Activated CD8-positive, alpha-beta T cell treated with anti-CD3 and anti-CD28 coated beads for 36 hours (primary cell): ENCODE measurements at regions of chr17 and their contacts with region 1.

Region 1: DNA sequence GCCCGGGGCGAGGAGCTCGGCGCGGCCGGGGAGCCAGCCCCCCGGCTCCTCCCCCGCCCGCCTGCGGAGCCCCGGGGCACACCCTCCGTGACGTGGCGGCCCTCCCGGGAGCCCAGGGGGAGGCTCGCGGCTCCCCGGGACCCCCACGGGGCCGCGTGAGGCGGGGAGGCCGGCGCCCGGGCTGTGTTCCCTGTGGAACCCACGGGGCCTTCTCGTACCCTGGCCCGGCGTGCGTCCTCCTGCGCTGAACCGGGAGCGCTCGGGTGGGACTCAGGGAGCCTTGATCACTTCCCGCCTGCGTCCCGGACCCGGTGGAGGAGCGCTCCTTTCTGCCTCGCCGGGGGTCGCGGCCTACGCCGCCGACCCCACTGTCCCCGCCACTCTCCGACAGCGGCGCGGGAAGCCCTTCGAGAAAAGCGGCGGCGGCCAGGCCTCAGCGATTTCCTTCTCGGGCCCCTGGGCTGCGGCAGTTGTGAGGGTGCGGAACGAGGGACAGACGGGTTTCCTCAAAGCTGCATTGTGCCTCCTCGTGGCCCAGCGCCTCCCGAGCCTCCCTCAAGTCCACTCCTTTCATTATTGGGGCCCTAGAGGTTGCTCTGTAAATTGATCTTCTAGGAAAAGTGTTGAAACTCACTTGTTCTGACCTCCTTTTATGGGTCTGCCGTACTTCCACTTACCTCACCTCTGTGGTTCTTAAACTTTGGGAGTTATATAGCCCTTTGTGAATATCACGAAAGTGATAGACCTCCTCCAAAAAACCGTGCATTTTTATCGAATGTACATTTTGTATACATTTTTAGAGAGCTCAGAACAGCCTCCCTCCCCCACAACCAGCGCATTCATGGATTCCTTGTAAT is 597 bp downstream of the LIG3 start:
- DNase-seq: peak; percentile 84
- ATAC-seq: peak; percentile 87
- H3K4me3 Mint-ChIP-seq: peak overlapping the region; percentile 94
- H3K27ac Mint-ChIP-seq: peak overlapping the region; percentile 89
- H3K4me1 Mint-ChIP-seq: peaks cover 45% of the 10 kb centered on the region
- H3K27me3 Mint-ChIP-seq: no peaks in the 10 kb centered on the region
- CTCF ChIP-seq: peak; percentile 47

Region 2: DNA sequence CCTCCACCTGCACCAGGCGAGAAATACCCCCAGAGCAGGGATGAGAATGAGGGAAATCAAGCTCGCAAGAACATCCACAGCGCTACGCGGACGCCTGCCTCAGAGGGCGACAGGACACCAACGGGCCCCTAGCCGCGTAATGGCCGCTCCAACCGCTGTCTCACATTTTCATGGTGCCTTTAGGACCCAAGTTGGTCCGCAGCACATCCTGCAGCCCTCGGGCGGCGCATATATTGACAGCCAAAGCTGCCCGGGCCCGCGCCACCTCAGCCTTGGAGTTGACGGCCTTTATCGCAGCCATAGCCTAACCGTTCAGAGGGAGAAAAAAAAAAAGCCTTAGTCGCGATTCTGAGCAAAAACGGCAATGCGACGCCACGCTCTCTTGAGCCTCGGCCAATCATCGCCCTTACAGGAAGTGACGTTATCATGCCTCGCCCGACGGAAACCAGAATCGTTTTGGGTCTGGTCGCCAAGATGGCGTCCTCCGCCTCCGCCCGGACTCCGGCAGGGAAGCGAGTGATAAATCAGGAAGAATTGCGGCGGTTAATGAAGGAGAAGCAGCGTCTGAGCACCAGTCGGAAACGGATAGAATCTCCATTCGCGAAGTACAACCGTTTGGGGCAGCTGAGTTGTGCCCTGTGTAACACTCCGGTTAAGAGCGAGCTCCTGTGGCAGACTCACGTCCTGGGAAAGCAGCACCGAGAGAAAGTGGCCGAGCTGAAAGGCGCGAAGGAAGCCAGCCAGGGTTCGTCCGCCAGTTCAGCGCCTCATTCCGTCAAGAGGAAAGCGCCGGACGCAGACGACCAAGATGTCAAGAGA is 19.6 kb before region 1 on chr17 and contains the starts of genes CCT6B and ZNF830:
- CTCF ChIA-PET with region 1: interaction called, 6 read pairs
- POLR2A ChIA-PET with region 1: interaction called, 51 read pairs
- intact Hi-C with region 1: loop called (anchors 1 kb)
- DNase-seq: peak; percentile 96
- ATAC-seq: peak; percentile 91
- H3K4me3 Mint-ChIP-seq: peak within 1 kb of the TSS; percentile 99
- H3K27ac Mint-ChIP-seq: peak within 1 kb of the TSS; percentile 100
- H3K4me1 Mint-ChIP-seq: peaks cover 21% of the 10 kb centered on the region
- H3K27me3 Mint-ChIP-seq: peaks cover 4% of the 10 kb centered on the region
- CTCF ChIP-seq: no peak
- total RNA-seq, gene CCT6B: 1.4 to 1.8 TPM
- total RNA-seq, gene ZNF830: 18.8 to 22.5 TPM

Region 3: GRCh38 chr17:34990921-34991365 is 10.0 kb after region 1 on chr17:
- CTCF ChIA-PET with region 1: interaction called, 5 read pairs
- POLR2A ChIA-PET with region 1: interaction called, 22 read pairs
- intact Hi-C with region 1: no loop called
- DNase-seq: no peak
- ATAC-seq: no peak
- H3K4me3 Mint-ChIP-seq: no peak overlapping the region
- H3K27ac Mint-ChIP-seq: peak overlapping the region; percentile 62
- H3K4me1 Mint-ChIP-seq: peaks cover 3% of the 10 kb centered on the region
- H3K27me3 Mint-ChIP-seq: no peaks in the 10 kb centered on the region
- CTCF ChIP-seq: no peak